Activated CD4-positive, alpha-beta T cell treated with anti-CD3 and anti-CD28 coated beads for 36 hours (primary cell): ENCODE measurements at regions of chr10 and their contacts with region 1.

Region 1: GRCh38 chr10:102132563-102133372 is at the start of gene PPRC1:
- DNase-seq: peak; percentile 99
- ATAC-seq: peak; percentile 96
- H3K4me3 Mint-ChIP-seq: peak within 1 kb of the TSS; percentile 94
- H3K27ac Mint-ChIP-seq: peak within 1 kb of the TSS; percentile 94
- H3K4me1 Mint-ChIP-seq: peaks cover 38% of the 10 kb centered on the region
- H3K27me3 Mint-ChIP-seq: no peaks in the 10 kb centered on the region
- total RNA-seq, gene PPRC1: 61.3 to 74.7 TPM

Region 2: DNA sequence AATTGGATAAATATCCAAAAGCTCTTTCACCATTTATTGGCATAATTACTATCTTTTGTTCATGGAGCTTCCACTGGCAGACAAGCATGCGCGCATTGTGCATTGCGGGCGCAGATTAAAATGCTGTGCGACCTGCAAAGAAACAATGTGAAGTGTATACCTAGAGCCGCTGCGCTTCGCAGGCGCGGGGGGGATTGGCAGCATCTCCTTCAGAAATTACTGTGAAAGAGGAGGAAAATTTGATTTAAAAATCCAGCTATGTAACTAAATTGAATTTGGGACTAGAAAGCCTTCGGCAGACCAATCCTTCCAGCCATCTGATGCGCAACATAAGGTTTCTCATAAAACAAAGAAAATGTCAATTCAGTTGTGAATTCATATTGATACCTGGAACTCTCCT is 339.2 kb before region 1 on chr10:
- CTCF ChIA-PET with region 1: no interaction called
- POLR2A ChIA-PET with region 1: no interaction called
- intact Hi-C with region 1: no loop called
- DNase-seq: no peak
- ATAC-seq: no peak
- H3K4me3 Mint-ChIP-seq: no peak overlapping the region
- H3K27ac Mint-ChIP-seq: no peak overlapping the region
- H3K4me1 Mint-ChIP-seq: peaks cover 2% of the 10 kb centered on the region
- H3K27me3 Mint-ChIP-seq: no peaks in the 10 kb centered on the region

Region 3: GRCh38 chr10:101830322-101831168 is 302.2 kb before region 1 on chr10:
- CTCF ChIA-PET with region 1: no interaction called
- POLR2A ChIA-PET with region 1: no interaction called
- intact Hi-C with region 1: loop called in 1 of 2 experiments (anchors 5 kb)
- DNase-seq: peak; percentile 96
- ATAC-seq: peak; percentile 77
- H3K4me3 Mint-ChIP-seq: peak overlapping the region; percentile 70
- H3K27ac Mint-ChIP-seq: peak overlapping the region; percentile 98
- H3K4me1 Mint-ChIP-seq: peaks cover 56% of the 10 kb centered on the region
- H3K27me3 Mint-ChIP-seq: no peaks in the 10 kb centered on the region

Region 4: GRCh38 chr10:102064868-102065560 is 67.8 kb before region 1 on chr10 and contains the start of gene HPS6:
- CTCF ChIA-PET with region 1: no interaction called
- POLR2A ChIA-PET with region 1: no interaction called
- intact Hi-C with region 1: loop called (anchors 1 kb)
- DNase-seq: peak; percentile 94
- ATAC-seq: peak; percentile 99
- H3K4me3 Mint-ChIP-seq: peak within 1 kb of the TSS; percentile 79
- H3K27ac Mint-ChIP-seq: peak within 1 kb of the TSS; percentile 88
- H3K4me1 Mint-ChIP-seq: peaks cover 22% of the 10 kb centered on the region
- H3K27me3 Mint-ChIP-seq: no peaks in the 10 kb centered on the region
- total RNA-seq, gene HPS6: 12.9 to 18.9 TPM

Region 5: GRCh38 chr10:102120142-102120990 is 12.4 kb before region 1 on chr10 and contains the start of gene LDB1:
- CTCF ChIA-PET with region 1: interaction called, 22 read pairs
- POLR2A ChIA-PET with region 1: interaction called, 12 read pairs
- intact Hi-C with region 1: loop called (anchors 1 kb)
- DNase-seq: peak; percentile 77
- ATAC-seq: peak; percentile 28
- H3K4me3 Mint-ChIP-seq: peak within 1 kb of the TSS; percentile 81
- H3K27ac Mint-ChIP-seq: peak within 1 kb of the TSS; percentile 97
- H3K4me1 Mint-ChIP-seq: peaks cover 51% of the 10 kb centered on the region
- H3K27me3 Mint-ChIP-seq: no peaks in the 10 kb centered on the region
- total RNA-seq, gene LDB1: 69.6 to 86.7 TPM

Region 6: DNA sequence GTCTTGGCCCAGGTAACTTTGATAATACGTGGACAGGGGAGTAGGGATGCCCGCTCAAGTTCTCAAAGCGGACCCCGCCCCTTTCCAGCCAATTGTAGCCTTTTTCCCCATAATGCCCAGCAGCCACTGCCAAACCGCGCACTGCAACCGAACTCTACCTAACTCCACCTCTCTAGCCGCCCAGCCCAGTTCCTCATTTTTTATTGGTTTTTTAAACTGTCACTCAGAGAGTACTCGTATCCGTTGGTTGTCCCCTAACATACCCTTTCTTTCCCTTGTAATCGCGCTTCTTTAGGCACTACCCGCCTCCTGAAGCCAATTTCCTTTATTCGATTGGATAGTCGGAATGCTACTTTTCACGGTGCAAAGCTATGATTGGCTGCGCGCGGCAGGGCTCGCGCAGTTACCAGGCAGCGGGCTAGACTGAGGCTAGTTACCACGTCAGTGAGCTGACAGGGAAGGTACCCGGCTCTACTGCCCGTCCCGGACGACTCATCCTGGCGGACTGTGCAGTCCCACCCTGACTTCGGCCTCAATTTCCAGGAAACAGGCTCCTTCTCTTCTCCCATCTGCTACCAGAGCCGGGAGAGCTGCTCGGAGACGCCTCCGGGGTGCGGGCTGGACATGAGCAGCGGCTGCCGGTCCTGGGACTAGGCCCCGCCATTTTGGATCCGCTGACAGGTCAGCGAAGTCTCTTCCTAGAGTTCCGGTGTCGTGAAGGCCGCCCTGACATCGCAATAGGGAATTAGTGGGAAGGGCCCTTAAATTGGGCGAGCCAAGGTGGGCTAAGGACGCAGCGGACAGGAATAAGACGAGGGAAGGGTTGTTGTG is 112.5 kb after region 1 on chr10 and contains the start of gene GBF1:
- CTCF ChIA-PET with region 1: no interaction called
- POLR2A ChIA-PET with region 1: no interaction called
- intact Hi-C with region 1: loop called (anchors 1 kb)
- DNase-seq: peak; percentile 94
- ATAC-seq: peak; percentile 90
- H3K4me3 Mint-ChIP-seq: peak within 1 kb of the TSS; percentile 98
- H3K27ac Mint-ChIP-seq: peak within 1 kb of the TSS; percentile 81
- H3K4me1 Mint-ChIP-seq: peaks cover 44% of the 10 kb centered on the region
- H3K27me3 Mint-ChIP-seq: peaks cover 18% of the 10 kb centered on the region
- total RNA-seq, gene GBF1: 33.1 to 37.5 TPM

Region 7: GRCh38 chr10:102334101-102334500 is 201.3 kb after region 1 on chr10:
- CTCF ChIA-PET with region 1: no interaction called
- POLR2A ChIA-PET with region 1: no interaction called
- intact Hi-C with region 1: no loop called
- DNase-seq: no peak
- ATAC-seq: no peak
- H3K4me3 Mint-ChIP-seq: no peak overlapping the region
- H3K27ac Mint-ChIP-seq: no peak overlapping the region
- H3K4me1 Mint-ChIP-seq: peaks cover 19% of the 10 kb centered on the region
- H3K27me3 Mint-ChIP-seq: no peaks in the 10 kb centered on the region

Region 8: DNA sequence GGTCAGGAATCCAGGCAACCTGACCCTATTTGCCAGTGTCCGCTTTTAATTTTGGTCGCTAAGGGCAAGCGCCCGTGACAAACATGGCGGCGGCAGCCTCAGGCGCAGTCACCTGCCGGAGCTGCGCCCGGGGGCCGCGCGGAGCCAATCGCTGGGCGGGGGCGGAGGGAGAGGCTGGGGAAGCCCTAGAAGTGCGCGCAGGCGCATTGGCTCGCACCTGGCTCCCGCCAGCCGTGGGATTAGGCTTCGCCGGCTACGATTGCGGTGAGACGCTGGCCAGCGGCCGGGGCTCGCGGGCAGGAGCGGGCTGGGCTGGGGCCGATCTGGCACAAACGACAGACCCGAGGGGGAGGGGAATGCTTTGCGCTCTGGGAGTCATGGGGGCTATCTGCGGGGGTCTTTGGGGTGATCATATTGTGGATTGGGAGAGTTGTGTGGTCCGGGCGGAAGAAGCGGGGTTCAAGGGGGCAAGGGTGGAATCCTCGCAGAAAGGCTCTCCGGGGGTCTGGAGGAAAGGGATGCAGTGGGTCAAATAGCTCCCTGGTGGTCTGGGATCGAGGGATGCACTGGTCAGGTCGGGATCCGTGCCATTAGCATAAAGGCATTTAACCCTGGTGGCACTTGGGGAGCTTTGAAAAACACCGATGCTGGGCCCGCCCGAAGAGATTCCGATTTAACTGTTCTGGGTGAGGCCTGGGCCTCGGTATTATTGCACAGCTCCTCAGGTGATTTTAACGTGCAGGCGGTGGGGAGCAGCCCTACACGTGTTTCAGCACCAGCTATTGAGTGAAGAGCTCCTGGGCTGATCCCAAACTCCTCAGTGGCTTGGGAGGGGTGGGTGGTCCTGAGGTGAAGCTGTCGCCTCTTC is 328.7 kb after region 1 on chr10:
- CTCF ChIA-PET with region 1: no interaction called
- POLR2A ChIA-PET with region 1: no interaction called
- intact Hi-C with region 1: loop called in 1 of 2 experiments (anchors 1 kb)
- DNase-seq: peak; percentile 97
- ATAC-seq: peak; percentile 98
- H3K4me3 Mint-ChIP-seq: peak overlapping the region; percentile 85
- H3K27ac Mint-ChIP-seq: peak overlapping the region; percentile 73
- H3K4me1 Mint-ChIP-seq: peaks cover 27% of the 10 kb centered on the region
- H3K27me3 Mint-ChIP-seq: no peaks in the 10 kb centered on the region

Region 9: DNA sequence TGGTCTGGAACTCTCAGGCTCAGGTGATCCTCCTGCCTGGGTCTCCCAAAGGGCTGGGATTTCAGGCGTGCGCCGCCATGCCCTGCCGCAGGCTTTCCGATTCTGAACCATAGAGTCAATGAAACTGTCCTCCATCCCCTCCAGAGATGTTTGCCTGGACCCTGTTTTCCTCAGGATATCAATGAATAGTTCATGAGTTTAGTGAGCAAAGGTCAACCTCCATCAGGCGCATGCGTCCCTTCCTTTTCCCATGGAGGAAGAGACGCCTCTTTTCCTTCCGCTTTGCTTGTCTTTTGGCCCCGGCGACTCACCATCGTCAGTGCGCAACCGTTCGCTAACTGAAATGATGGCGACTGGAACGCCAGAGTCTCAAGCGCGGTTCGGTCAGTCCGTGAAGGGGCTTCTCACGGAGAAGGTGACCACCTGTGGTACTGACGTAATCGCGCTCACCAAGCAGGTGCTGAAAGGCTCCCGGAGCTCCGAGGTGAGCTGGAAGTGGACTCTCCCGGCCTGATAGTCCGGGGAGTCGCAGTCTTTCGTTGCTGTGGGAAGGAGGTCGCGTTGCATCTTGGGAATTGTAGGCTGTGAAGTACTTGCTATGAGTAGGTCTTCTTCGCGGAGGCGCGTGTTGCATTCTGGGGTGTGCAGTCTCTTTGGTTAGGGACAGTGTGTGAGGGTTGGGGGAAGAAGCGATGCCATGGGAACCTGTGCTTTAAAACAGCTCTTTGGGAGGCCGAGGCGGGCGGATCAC is 721.4 kb after region 1 on chr10 and contains the start of gene BORCS7:
- CTCF ChIA-PET with region 1: no interaction called
- POLR2A ChIA-PET with region 1: no interaction called
- intact Hi-C with region 1: loop called in 1 of 2 experiments (anchors 2 kb)
- DNase-seq: peak; percentile 94
- ATAC-seq: peak; percentile 100
- H3K4me3 Mint-ChIP-seq: peak within 1 kb of the TSS; percentile 95
- H3K27ac Mint-ChIP-seq: peak within 1 kb of the TSS; percentile 99
- H3K4me1 Mint-ChIP-seq: peaks cover 14% of the 10 kb centered on the region
- H3K27me3 Mint-ChIP-seq: no peaks in the 10 kb centered on the region
- total RNA-seq, gene BORCS7: 4.5 to 5.1 TPM

Region 10: DNA sequence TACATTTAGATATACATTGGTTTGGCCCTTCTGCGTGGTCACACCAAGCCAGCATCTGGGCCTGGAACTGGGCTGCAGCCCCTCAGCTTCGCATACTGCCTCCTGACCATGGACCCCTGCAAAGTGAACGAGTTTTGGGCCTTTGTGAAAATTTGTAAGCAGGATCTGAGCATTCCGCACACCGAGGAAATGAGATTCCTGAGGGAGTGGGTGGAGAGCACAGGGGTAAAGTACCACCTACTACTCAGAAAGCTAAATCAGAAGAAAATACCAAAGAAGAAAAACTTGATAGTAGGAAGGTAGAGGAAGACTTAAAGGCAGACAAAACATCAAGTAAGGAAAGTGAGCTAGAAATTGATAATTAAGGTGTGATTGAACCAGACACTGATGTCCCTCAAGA is 1082.8 kb after region 1 on chr10:
- CTCF ChIA-PET with region 1: no interaction called
- POLR2A ChIA-PET with region 1: no interaction called
- intact Hi-C with region 1: no loop called
- DNase-seq: no peak
- ATAC-seq: no peak
- H3K4me3 Mint-ChIP-seq: no peak overlapping the region
- H3K27ac Mint-ChIP-seq: no peak overlapping the region
- H3K4me1 Mint-ChIP-seq: no peaks in the 10 kb centered on the region
- H3K27me3 Mint-ChIP-seq: peaks cover 2% of the 10 kb centered on the region